ENCODE measurements at regions of chr17 and their contacts with region 1.

Region 1: GRCh38 chr17:82037113-82037888 is at the start of gene DCXR:
- H3K4me3 Mint-ChIP-seq: peak within 1 kb of the TSS; percentile 82
- H3K27ac Mint-ChIP-seq: peak within 1 kb of the TSS; percentile 93
- H3K4me1 Mint-ChIP-seq: peaks cover 46% of the 10 kb centered on the region
- H3K27me3 Mint-ChIP-seq: peaks cover 21% of the 10 kb centered on the region

Region 2: DNA sequence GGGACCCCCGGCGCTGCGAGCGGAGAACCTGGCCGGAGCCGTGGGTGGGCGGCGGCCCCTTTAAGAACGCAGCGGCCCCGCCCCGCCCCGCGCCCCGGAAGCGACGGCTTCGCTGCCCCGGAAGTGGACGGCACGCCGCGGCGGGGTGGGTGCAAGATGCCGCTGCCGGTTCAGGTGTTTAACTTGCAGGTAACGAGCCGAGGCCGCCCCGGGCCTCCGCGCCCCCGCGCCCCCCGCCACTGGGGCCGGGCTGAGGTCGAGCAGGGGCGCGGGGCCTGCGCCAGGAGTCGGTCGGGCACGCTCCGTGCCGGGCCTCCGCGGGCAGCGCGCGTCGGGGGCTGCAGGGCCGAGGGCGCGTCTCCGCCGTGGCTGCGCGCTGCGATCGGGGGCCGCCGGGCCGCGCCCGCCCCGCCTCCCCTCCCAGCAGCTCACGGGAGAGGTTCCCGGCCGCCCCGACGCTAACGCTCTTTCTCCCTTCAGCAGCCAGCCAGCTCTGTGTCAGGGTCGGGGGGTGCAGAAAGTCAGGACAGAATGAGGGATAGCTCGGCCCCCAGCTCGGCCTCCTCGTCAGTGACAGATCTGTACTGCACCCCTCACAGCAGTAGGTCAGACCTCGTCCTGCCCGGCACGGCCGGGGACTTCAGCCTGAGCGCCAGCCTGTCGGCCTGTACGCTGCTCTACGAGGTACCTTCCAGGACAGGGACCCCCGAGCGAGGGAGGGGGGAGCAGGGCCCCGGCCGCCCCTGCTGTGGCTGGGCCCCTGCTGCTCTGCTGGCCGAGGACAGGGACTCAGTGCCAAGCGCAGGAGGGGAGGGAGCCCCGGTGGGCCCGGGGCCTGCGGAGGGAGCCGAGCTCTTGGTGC is 14.7 kb after region 1 on chr17 and contains the starts of genes GPS1 and RFNG:
- intact Hi-C with region 1: loop called (anchors 1 kb)
- H3K4me3 Mint-ChIP-seq: peak within 1 kb of the TSS; percentile 94
- H3K27ac Mint-ChIP-seq: peak within 1 kb of the TSS; percentile 87
- H3K4me1 Mint-ChIP-seq: peaks cover 46% of the 10 kb centered on the region
- H3K27me3 Mint-ChIP-seq: no peaks in the 10 kb centered on the region

Region 3: DNA sequence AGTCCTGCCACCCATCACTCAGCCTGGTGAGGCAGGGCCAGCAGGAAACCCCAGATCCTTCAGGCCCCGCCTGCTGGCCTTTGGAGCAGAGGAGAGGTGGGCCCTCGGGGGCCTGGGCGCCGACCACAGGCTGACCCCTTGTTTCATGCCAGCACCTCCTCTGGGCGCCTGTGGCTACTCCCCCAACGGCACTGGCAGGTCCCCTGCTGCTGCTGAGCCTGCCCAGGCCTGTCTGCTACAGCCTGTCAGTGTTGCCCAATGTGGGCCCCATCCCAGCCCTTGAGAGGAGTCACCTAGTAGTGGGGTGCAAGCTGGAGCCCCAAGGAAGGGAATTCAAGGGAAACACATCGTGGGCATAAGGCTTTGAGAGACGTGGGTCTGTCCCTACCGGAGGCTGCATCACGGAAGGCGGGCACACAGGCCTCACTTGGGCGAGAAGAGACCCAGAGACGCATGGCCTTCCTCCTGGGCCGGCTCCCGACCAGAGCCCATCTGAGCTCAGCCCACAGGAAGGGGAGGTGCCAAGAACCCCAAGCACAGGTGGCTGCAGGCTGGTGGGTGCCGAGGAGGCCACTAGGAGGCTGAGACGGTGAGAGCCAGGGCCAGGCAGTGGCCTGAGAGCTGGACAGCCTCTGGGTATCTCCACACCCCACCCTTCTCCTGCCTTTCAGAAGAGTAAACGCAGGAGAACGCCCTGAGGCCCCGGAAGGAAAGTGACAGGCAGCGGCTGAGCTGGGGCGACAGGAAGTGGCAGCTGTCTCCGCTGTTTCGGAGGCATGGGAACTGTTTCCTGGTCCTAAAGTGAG is 68.8 kb after region 1 on chr17:
- intact Hi-C with region 1: loop called (anchors 10 kb)
- H3K4me3 Mint-ChIP-seq: peak overlapping the region; percentile 79
- H3K27ac Mint-ChIP-seq: peak overlapping the region; percentile 92
- H3K4me1 Mint-ChIP-seq: peaks cover 31% of the 10 kb centered on the region
- H3K27me3 Mint-ChIP-seq: no peaks in the 10 kb centered on the region